PC-3 (cell line): ENCODE measurements at regions of chr3 and their contacts with region 1.

Region 1: GRCh38 chr3:155854141-155854940 is at the start of gene SLC33A1:
- DNase-seq: peak; percentile 99
- ATAC-seq: peak; percentile 94
- H3K4me3 ChIP-seq: peak within 1 kb of the TSS; percentile 95
- H3K27ac ChIP-seq: peak within 1 kb of the TSS; percentile 54
- H3K4me1 ChIP-seq: peaks cover 11% of the 10 kb centered on the region; the same call in 1 of the 2 replicates
- H3K27me3 ChIP-seq: no peaks in the 10 kb centered on the region
- CTCF ChIP-seq: no peak
- total RNA-seq, gene SLC33A1: 32.3 and 32.9 TPM in 2 replicates

Region 2: GRCh38 chr3:155352900-155353490 is 501.3 kb before region 1 on chr3:
- CTCF ChIA-PET with region 1: no interaction called
- POLR2A ChIA-PET with region 1: no interaction called
- intact Hi-C with region 1: loop called (anchors 10 kb)
- DNase-seq: peak; percentile 84
- ATAC-seq: peak; percentile 62
- H3K4me3 ChIP-seq: no peak overlapping the region
- H3K27ac ChIP-seq: no peak overlapping the region
- H3K4me1 ChIP-seq: peaks cover 3% of the 10 kb centered on the region; the same call in 1 of the 2 replicates
- H3K27me3 ChIP-seq: no peaks in the 10 kb centered on the region
- CTCF ChIP-seq: peak; percentile 81

Region 3: DNA sequence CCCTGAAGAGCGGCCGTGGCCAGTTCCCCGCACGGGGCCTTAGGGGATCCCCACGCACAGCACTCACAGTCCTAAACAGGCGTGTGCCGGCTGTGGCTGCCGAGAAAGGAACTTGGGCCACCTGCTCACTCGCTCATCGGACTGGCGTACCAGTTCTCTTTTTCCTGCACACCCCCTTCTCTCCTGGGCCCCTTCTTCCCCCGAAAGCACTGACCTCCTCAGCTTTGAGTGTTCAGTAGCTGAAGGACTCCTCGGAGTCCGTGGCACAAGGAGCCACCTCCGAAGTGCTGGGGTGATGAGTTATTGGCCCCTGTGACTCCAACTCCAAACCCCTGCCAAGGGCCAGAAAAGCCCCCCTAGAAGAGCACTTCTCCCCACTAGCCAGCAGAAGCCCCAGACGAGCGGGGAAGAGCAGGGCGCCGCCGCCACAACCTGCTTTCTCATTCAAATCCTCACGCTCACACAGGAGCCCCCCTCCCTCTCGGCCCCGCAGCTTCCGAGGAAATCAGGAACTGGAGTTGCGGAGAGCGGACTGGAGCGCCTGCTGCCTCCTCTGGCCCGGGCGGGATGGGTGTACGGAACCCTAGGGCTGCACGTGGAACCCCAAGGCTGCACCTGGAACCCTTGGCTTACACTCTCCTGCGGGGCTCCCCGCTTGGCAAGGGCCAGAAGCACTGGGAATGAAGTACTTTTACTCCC is 109.6 kb before region 1 on chr3 and contains the start of gene PLCH1:
- CTCF ChIA-PET with region 1: no interaction called
- POLR2A ChIA-PET with region 1: interaction called, 3 read pairs
- intact Hi-C with region 1: loop called (anchors 2 kb)
- DNase-seq: peak; percentile 81
- ATAC-seq: peak; percentile 59
- H3K4me3 ChIP-seq: peak within 1 kb of the TSS; percentile 91
- H3K27ac ChIP-seq: peak within 1 kb of the TSS; percentile 17
- H3K4me1 ChIP-seq: peaks cover 48% of the 10 kb centered on the region
- H3K27me3 ChIP-seq: no peaks in the 10 kb centered on the region
- CTCF ChIP-seq: no peak
- total RNA-seq, gene PLCH1: 4.1 and 4.5 TPM in 2 replicates

Region 4: DNA sequence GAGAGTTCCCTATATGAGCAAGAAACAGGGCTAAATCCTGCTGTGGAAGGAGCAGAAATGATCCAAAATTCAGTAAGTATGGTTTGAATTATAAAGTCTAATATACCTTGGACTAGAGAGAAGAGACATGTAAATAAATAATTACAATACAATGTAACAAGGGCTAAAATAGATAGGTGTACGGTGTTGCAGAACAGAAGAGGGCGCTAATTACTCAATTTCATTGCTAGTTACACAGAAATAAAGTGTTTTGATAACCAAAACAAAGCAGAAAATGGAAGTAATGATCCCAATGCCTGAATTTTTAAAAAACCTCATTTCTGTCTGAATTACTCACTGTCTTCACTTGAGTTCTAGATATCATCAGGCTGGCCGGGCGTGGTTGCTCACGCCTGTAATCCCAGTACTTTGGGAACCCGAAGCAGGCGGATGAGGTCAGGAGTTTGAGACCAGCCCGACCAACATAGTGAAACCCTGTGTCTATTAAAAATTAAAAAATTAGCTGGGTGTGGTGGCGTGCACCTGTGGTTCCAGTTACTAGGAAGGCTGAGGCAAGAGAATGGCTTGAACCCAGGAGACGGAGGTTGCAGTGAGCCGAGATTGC is 101.2 kb before region 1 on chr3:
- CTCF ChIA-PET with region 1: no interaction called
- POLR2A ChIA-PET with region 1: no interaction called
- intact Hi-C with region 1: loop called (anchors 1 kb)
- DNase-seq: peak; percentile 67
- ATAC-seq: peak; percentile 37
- H3K4me3 ChIP-seq: no peak overlapping the region
- H3K27ac ChIP-seq: no peak overlapping the region
- H3K4me1 ChIP-seq: peaks cover 13% of the 10 kb centered on the region
- H3K27me3 ChIP-seq: no peaks in the 10 kb centered on the region
- CTCF ChIP-seq: peak; percentile 84

Region 5: DNA sequence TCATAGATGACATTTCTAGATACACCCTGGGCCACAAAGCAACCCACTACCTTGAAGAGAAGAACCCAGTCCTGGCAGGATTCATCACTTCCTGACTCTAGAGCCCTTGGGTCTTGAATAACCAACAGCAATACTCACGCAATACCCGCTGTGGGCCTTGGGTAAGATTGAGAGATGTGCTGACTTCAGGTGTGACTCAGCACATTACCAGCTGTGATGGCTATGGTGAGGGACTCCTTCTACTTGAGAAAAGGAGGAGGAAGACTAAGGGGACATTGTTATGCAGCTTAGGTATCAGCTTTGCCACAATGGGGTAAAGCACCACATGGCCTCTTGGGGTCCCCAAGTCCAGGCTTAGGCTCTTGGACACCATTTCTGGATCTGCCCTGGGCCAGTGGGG is 63.2 kb before region 1 on chr3:
- CTCF ChIA-PET with region 1: no interaction called
- POLR2A ChIA-PET with region 1: no interaction called
- intact Hi-C with region 1: no loop called
- DNase-seq: no peak
- ATAC-seq: no peak
- H3K4me3 ChIP-seq: no peak overlapping the region
- H3K27ac ChIP-seq: no peak overlapping the region
- H3K4me1 ChIP-seq: no peaks in the 10 kb centered on the region
- H3K27me3 ChIP-seq: no peaks in the 10 kb centered on the region
- CTCF ChIP-seq: no peak

Region 6: GRCh38 chr3:155805802-155806618 is 48.3 kb before region 1 on chr3 and contains the start of gene C3orf33:
- CTCF ChIA-PET with region 1: interaction called, 6 read pairs
- POLR2A ChIA-PET with region 1: interaction called, 6 read pairs
- intact Hi-C with region 1: loop called (anchors 1 kb)
- DNase-seq: peak; percentile 69
- ATAC-seq: peak; percentile 95
- H3K4me3 ChIP-seq: peak within 1 kb of the TSS; percentile 86
- H3K27ac ChIP-seq: peak within 1 kb of the TSS; percentile 24; the same call in 1 of the 2 replicates
- H3K4me1 ChIP-seq: peaks cover 4% of the 10 kb centered on the region; the same call in 1 of the 2 replicates
- H3K27me3 ChIP-seq: no peaks in the 10 kb centered on the region
- CTCF ChIP-seq: peak; percentile 95
- total RNA-seq, gene C3orf33: 3.5 and 3.6 TPM in 2 replicates

Region 7: DNA sequence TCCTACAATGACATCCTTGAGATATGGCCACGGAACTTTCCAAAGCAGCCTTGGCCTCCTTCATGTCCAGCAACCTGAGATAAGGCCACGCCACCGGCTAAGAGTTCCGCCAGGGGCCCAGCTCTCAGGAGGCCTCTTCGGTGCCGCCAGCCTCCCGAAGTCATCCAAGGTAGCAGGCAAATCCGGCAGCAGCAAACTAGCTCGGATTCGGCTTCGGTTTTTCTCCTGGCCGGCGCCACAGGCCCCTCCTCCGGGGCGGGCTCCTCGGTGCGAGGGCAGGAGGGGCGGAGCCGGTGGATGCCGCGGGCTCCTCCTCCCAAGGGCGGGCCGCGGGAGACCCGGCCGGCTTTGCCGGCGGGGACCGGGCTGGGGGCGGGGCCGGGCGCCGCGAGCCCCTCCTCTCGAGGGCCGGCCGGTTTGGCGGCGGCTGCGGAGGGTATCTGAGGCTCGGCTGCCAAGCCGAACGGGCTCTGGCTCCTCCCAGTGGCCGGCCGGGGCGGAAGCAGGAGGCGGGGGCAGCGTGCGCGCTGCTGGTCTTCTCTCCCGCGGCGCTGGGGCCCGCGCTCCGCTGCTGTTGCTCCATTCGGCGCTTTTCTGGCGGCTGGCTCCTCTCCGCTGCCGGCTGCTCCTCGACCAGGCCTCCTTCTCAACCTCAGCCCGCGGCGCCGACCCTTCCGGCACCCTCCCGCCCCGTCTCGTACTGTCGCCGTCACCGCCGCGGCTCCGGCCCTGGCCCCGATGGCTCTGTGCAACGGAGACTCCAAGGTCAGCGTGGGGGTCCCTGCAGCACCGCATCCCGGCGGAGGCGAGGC is 16.0 kb after region 1 on chr3 and contains the start of gene GMPS:
- CTCF ChIA-PET with region 1: no interaction called
- POLR2A ChIA-PET with region 1: no interaction called
- intact Hi-C with region 1: loop called (anchors 1 kb)
- DNase-seq: peak; percentile 97
- ATAC-seq: peak; percentile 85
- H3K4me3 ChIP-seq: peak within 1 kb of the TSS; percentile 79
- H3K27ac ChIP-seq: peak within 1 kb of the TSS; percentile 75
- H3K4me1 ChIP-seq: peaks cover 14% of the 10 kb centered on the region
- H3K27me3 ChIP-seq: no peaks in the 10 kb centered on the region
- CTCF ChIP-seq: peak; percentile 33; the same call in 1 of the 2 replicates
- total RNA-seq, gene GMPS: 42.2 and 43.3 TPM in 2 replicates

Region 8: DNA sequence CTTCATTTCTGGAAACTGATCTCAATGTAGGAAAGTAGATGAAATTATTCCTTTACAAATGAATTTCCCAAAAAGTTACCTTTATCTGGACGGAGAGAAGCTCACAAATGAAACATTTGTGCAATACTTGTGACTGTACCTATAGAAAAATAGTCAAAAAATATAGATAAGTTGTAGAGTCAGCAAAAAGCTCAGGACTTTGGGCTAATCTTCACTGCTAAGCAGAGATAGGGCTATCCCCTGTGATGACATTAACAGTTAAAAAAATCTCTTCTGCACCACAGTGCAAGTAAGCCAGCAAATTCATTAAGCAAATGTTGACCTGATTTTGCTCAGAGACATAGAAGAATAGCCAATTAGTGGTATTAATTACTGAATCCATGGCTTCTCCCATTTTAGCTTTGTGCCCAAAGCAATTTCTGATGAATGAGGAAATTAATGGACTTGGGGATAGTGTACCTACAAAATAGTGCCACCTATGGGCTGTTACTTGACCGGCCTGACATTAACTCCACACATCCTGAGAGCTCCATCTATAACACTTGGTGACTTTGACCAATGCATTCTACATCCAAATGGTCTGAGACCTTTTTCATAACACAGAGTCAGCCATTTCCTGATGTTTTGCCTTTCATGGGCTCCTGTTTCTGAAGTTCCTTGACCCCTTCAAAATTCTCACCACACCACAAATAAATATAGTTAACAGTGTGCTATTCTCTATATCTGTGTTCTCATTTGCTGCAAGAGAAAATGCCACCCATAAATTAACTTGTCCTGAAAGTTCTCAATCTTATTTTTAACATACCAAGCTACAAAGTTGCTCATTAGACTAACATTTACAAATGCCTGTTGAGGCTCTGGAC is 595.6 kb after region 1 on chr3:
- CTCF ChIA-PET with region 1: no interaction called
- POLR2A ChIA-PET with region 1: no interaction called
- intact Hi-C with region 1: no loop called
- DNase-seq: peak; percentile 64
- ATAC-seq: peak; percentile 88
- H3K4me3 ChIP-seq: no peak overlapping the region
- H3K27ac ChIP-seq: no peak overlapping the region
- H3K4me1 ChIP-seq: no peaks in the 10 kb centered on the region
- H3K27me3 ChIP-seq: peaks cover 23% of the 10 kb centered on the region
- CTCF ChIP-seq: peak; percentile 82